ENCODE measurements at regions of chr14 and their contacts with region 1.

Region 1: GRCh38 chr14:71138448-71139293 is 231.4 kb downstream of the PCNX1 start:
- DNase-seq: peak; percentile 68
- H3K4me3 Mint-ChIP-seq: no peak overlapping the region
- H3K27ac Mint-ChIP-seq: no peak overlapping the region
- H3K4me1 Mint-ChIP-seq: peaks cover 24% of the 10 kb centered on the region
- H3K27me3 Mint-ChIP-seq: no peaks in the 10 kb centered on the region

Region 2: GRCh38 chr14:71221119-71221518 is 82.4 kb after region 1 on chr14:
- CTCF ChIA-PET with region 1: interaction called, 4 read pairs
- POLR2A ChIA-PET with region 1: interaction called, 7 read pairs
- intact Hi-C with region 1: loop called (anchors 1 kb)
- DNase-seq: no peak
- H3K4me3 Mint-ChIP-seq: no peak overlapping the region
- H3K27ac Mint-ChIP-seq: no peak overlapping the region
- H3K4me1 Mint-ChIP-seq: peaks cover 24% of the 10 kb centered on the region
- H3K27me3 Mint-ChIP-seq: no peaks in the 10 kb centered on the region

Region 3: GRCh38 chr14:71290960-71291466 is 152.3 kb after region 1 on chr14:
- CTCF ChIA-PET with region 1: interaction called, 5 read pairs
- POLR2A ChIA-PET with region 1: no interaction called
- intact Hi-C with region 1: loop called (anchors 1 kb)
- DNase-seq: peak; percentile 70
- H3K4me3 Mint-ChIP-seq: no peak overlapping the region
- H3K27ac Mint-ChIP-seq: peak overlapping the region; percentile 61
- H3K4me1 Mint-ChIP-seq: peaks cover 17% of the 10 kb centered on the region
- H3K27me3 Mint-ChIP-seq: no peaks in the 10 kb centered on the region

Region 4: DNA sequence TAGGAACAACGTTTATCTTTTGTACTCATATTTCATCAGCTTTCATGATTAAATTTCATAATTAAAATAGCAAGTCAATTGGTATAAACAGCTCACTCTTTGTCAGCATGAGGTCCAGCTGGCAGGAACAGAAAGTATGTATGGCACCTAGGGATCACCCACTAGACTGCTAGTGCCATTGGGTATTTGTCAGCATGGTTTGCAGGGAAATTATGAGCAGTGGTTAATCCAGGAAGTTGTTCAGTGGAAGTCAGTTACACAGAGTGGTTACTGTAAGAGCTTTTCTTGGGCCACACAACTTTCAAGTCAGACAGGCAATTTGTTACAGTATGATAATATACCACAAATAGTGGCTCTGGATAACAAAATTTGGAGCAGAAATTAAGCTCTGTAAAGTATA is 453.3 kb after region 1 on chr14:
- CTCF ChIA-PET with region 1: no interaction called
- POLR2A ChIA-PET with region 1: no interaction called
- intact Hi-C with region 1: loop called (anchors 2 kb)
- DNase-seq: peak; percentile 53
- H3K4me3 Mint-ChIP-seq: no peak overlapping the region
- H3K27ac Mint-ChIP-seq: peak overlapping the region; percentile 29
- H3K4me1 Mint-ChIP-seq: peaks cover 41% of the 10 kb centered on the region
- H3K27me3 Mint-ChIP-seq: no peaks in the 10 kb centered on the region

Region 5: DNA sequence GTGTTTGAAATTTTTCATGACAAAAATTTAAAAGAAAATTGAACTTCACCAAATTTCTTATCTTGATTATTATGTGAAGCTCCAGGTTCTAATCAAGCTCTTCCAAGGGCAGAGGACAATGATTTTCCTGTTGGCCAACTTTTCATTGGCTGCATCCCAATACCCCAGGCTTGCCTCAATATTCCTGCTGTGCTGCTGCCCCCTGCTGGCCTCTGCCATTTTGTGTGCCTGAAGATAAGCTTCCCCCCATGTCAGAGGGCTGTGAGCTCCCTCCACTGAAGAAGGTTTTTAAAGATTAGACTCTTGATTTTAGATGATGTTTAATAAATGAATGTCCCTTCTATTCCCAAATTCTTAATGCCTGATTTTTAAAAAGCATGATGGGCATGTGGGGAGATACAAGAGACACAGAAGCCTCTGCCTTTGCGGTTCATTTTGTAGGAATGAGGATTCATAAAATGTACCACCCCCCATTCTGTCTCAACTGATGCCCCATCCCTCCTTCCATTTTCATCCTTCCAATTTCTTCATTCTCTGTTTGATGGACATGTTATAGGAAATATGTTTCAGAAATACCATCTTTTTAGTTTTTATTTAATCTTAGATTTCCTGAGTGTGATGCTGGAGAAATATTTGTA is 716.8 kb after region 1 on chr14:
- CTCF ChIA-PET with region 1: interaction called, 16 read pairs
- POLR2A ChIA-PET with region 1: no interaction called
- intact Hi-C with region 1: no loop called
- DNase-seq: peak; percentile 67
- H3K4me3 Mint-ChIP-seq: no peak overlapping the region
- H3K27ac Mint-ChIP-seq: no peak overlapping the region
- H3K4me1 Mint-ChIP-seq: peaks cover 5% of the 10 kb centered on the region
- H3K27me3 Mint-ChIP-seq: peaks cover 47% of the 10 kb centered on the region